A673 (cell line): ENCODE measurements at regions of chr19 and their contacts with region 1.

Region 1: GRCh38 chr19:50777754-50778303 is 7.6 kb downstream of the GPR32 start:
- DNase-seq: peak; percentile 85
- H3K4me3 ChIP-seq: peak overlapping the region; percentile 39
- H3K27ac ChIP-seq: no peak overlapping the region
- H3K4me1 ChIP-seq: peaks cover 17% of the 10 kb centered on the region
- H3K27me3 ChIP-seq: no peaks in the 10 kb centered on the region
- CTCF ChIP-seq: no peak

Region 2: GRCh38 chr19:50357178-50358100 is 420.4 kb before region 1 on chr19:
- CTCF ChIA-PET with region 1: interaction called, 16 read pairs
- POLR2A ChIA-PET with region 1: interaction called, 9 read pairs
- intact Hi-C with region 1: loop called (anchors 5 kb)
- DNase-seq: peak; percentile 89
- H3K4me3 ChIP-seq: peak overlapping the region; percentile 65
- H3K27ac ChIP-seq: peak overlapping the region; percentile 85
- H3K4me1 ChIP-seq: no peaks in the 10 kb centered on the region
- H3K27me3 ChIP-seq: no peaks in the 10 kb centered on the region
- CTCF ChIP-seq: peak; percentile 87

Region 3: GRCh38 chr19:50537762-50538230 is 240.0 kb before region 1 on chr19:
- CTCF ChIA-PET with region 1: interaction called, 11 read pairs
- POLR2A ChIA-PET with region 1: no interaction called
- intact Hi-C with region 1: loop called (anchors 1 kb)
- DNase-seq: peak; percentile 90
- H3K4me3 ChIP-seq: no peak overlapping the region
- H3K27ac ChIP-seq: no peak overlapping the region
- H3K4me1 ChIP-seq: no peaks in the 10 kb centered on the region
- H3K27me3 ChIP-seq: no peaks in the 10 kb centered on the region
- CTCF ChIP-seq: peak; percentile 95

Region 4: GRCh38 chr19:50607874-50608785 is 169.7 kb before region 1 on chr19:
- CTCF ChIA-PET with region 1: no interaction called
- POLR2A ChIA-PET with region 1: no interaction called
- intact Hi-C with region 1: loop called (anchors 2 kb)
- DNase-seq: peak; percentile 98
- H3K4me3 ChIP-seq: peak overlapping the region; percentile 38
- H3K27ac ChIP-seq: no peak overlapping the region
- H3K4me1 ChIP-seq: peaks cover 5% of the 10 kb centered on the region
- H3K27me3 ChIP-seq: no peaks in the 10 kb centered on the region
- CTCF ChIP-seq: peak; percentile 96

Region 5: GRCh38 chr19:50669302-50670101 is 108.3 kb before region 1 on chr19:
- CTCF ChIA-PET with region 1: no interaction called
- POLR2A ChIA-PET with region 1: no interaction called
- intact Hi-C with region 1: loop called (anchors 1 kb)
- DNase-seq: peak; percentile 64
- H3K4me3 ChIP-seq: no peak overlapping the region
- H3K27ac ChIP-seq: no peak overlapping the region
- H3K4me1 ChIP-seq: peaks cover 7% of the 10 kb centered on the region
- H3K27me3 ChIP-seq: peaks cover 30% of the 10 kb centered on the region
- CTCF ChIP-seq: peak; percentile 92

Region 6: DNA sequence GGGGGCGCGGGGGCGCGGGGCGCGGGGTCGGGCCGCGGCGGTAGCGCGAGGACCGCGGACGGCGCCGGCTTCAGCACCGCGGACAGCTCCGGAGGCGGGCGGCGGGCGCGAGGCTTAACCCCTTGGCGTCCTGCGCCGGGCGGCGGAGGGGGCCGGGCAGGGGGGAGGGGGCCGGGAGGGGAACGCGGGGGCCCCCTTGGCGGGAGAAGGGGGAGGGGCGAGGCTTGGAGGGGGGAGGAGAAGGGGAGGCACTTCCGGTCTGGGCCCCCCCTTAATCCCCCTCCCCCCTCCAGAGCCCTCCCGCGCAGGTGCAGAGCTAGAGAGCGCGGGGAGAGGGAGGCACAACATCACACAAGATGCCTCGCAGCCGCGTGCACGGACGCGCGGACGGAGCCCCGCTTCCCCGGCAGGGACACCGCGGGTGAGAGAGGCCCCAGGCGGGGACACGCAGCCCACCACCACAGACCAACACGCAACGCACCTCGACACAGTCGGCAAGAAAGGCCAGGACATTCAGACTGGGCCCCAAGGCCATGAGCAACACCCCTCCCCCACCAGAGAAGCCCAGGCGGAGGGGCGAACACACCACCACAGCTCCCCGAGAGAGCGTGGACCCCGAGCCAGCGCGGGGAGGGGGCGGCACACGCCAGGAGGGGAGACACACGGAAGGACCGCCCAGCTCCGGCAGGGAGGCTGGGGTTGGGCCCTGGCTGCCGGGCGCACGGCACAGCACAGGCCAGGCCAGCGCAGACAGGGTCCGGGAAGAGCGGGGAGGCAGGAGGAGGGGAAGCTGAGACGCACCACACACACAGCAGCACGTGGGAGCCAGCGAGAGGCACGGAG is 82.4 kb before region 1 on chr19:
- CTCF ChIA-PET with region 1: no interaction called
- POLR2A ChIA-PET with region 1: no interaction called
- intact Hi-C with region 1: no loop called
- DNase-seq: peak; percentile 48
- H3K4me3 ChIP-seq: no peak overlapping the region
- H3K27ac ChIP-seq: no peak overlapping the region
- H3K4me1 ChIP-seq: peaks cover 6% of the 10 kb centered on the region
- H3K27me3 ChIP-seq: peaks cover 8% of the 10 kb centered on the region
- CTCF ChIP-seq: no peak

Region 7: GRCh38 chr19:50705422-50706019 is 72.3 kb before region 1 on chr19:
- CTCF ChIA-PET with region 1: interaction called, 13 read pairs
- POLR2A ChIA-PET with region 1: no interaction called
- intact Hi-C with region 1: loop called (anchors 1 kb)
- DNase-seq: peak; percentile 92
- H3K4me3 ChIP-seq: no peak overlapping the region
- H3K27ac ChIP-seq: no peak overlapping the region
- H3K4me1 ChIP-seq: peaks cover 14% of the 10 kb centered on the region
- H3K27me3 ChIP-seq: no peaks in the 10 kb centered on the region
- CTCF ChIP-seq: peak; percentile 88

Region 8: DNA sequence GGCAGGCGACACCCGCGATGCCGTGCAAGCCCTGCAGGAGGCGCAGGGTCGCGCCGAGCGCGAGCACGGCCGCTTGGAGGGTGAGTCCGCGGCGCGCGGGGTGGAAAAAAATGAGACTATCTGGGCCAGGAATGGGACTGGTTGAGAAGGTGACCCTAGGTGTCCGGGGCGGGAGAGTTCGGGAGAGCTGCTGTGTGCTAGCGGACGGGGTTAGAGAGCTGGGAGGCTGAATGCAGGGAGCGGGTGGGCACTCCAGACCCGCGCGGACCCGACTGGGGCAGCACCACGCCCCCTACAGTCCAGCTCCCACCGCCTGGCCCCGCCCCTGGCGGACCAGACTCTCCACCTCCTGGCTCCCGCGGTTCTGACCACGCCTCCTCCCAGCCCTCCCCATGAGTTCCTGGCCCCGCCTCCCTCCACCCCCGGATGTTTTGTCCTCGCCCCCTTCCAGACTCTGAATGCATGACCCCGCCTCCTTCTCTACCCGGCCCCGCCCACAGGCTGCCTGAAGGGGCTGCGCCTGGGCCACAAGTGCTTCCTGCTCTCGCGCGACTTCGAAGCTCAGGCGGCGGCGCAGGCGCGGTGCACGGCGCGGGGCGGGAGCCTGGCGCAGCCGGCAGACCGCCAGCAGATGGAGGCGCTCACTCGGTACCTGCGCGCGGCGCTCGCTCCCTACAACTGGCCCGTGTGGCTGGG is 53.2 kb before region 1 on chr19:
- CTCF ChIA-PET with region 1: interaction called, 10 read pairs
- POLR2A ChIA-PET with region 1: no interaction called
- intact Hi-C with region 1: loop called (anchors 5 kb)
- DNase-seq: peak; percentile 100
- H3K4me3 ChIP-seq: peak overlapping the region; percentile 61
- H3K27ac ChIP-seq: peak overlapping the region; percentile 85
- H3K4me1 ChIP-seq: peaks cover 71% of the 10 kb centered on the region
- H3K27me3 ChIP-seq: no peaks in the 10 kb centered on the region
- CTCF ChIP-seq: peak; percentile 93

Region 9: GRCh38 chr19:50804420-50805272 is 26.8 kb after region 1 on chr19:
- CTCF ChIA-PET with region 1: no interaction called
- POLR2A ChIA-PET with region 1: no interaction called
- intact Hi-C with region 1: no loop called
- DNase-seq: peak; percentile 99
- H3K4me3 ChIP-seq: peak overlapping the region; percentile 94
- H3K27ac ChIP-seq: peak overlapping the region; percentile 99
- H3K4me1 ChIP-seq: peaks cover 15% of the 10 kb centered on the region
- H3K27me3 ChIP-seq: no peaks in the 10 kb centered on the region
- CTCF ChIP-seq: no peak